Left cardiac atrium (tissue), 4 donors: ENCODE measurements at regions of chr17 and their contacts with region 1.

Region 1: DNA sequence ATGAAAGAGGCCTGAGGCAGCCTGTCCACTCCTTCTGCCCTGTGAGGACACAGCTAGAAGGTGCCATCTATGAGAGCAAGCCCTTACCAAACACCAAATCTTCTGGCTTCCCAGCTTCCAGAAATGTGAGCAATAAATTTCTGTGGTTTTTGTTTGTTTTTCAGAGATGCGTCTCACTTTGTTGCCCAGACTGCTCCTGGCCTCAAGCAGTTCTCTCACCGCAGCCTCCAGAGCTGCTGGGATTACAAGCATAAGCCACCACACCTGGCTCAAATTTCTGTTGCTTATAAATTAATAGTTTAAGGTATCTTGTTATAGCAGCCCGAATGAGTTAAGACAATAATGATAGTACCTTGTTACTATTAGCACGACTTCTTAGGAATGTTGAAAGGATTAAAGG is 12.5 kb upstream of the SLC16A11 start:
- DNase-seq: no peak
- ATAC-seq: no peak

Region 2: DNA sequence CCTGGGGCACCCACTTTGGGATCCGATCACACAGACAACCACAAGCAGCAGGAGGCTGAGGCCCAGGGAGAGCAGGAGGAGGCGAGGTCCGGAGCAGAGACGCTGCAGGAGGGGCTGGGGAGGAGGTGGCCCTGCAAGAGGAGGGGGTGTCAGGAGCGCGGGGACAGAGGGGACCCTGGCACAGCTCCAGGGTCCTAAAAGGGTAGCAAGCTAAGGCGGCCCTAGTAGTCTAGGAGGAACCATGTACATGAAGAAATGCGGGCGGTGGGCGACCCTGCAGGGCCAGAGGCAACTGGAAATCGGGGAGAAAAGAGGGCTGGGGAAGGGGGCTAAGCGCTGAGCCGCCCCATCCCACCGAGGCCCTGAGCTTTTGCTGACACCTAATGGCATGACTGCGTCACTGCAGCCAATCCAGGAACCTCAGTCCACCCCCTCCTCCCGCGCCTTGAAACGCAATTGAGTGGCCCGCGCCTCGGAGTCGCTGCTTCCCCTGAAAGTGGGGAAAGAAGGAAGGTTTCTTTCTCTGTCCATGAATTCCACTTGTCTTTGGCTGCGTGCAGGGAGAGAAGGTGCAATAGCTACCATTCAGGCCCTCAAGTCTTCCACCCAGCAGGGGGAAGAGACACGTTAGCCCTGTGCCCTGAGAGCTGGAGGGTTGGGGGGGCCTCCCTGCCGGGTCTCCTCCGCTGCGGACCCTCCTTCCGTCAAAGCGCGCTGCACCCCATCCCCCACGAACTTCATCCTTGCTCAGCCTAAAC is 121.0 kb after region 1 on chr17:
- intact Hi-C with region 1: loop called in 1 of 2 experiments (anchors 10 kb)
- DNase-seq: peak; percentile 66
- ATAC-seq: peak; percentile 81